A549 (cell line): ENCODE measurements at regions of chr1 and their contacts with region 1.

Region 1: DNA sequence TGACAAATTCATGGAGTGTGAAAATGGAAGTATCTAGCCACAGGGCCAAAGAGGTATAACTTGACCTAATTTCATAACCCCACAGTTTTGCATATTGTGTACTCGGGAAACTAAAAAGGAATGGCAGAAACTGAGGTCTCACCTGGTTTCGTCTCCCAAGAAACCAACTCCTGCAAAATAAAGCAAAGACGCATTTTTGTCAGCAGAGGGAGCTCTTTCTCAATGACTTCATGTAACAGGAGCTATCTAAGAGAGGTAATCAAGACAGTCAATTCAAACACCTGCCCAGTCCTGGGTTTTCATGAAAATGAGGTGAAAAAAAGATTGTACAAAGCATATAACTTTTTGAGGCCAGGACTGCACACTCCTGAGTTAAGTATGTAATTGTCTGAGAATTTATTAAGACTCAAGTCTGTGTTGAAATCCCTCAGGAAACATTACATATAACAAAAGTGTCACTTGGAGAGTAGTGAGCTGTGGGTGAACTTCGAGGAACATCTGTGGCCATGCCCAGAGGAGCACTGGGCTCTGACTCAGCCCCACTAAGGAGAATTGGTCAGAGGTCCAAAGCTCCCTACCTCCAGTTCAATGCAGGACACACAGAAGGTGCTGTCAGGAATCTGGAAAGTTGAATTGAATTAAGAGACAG is 17.6 kb downstream of the FCRL4 start:
- DNase-seq: peak; percentile 48 to 65
- ATAC-seq: peak; percentile 58 to 87; a peak in 3 of 6 replicates
- H3K4me3 ChIP-seq: no peak overlapping the region
- H3K27ac ChIP-seq: no peak overlapping the region
- H3K4me1 ChIP-seq: no peaks in the 10 kb centered on the region
- CTCF ChIP-seq: peak; percentile 76
- EP300 ChIP-seq: no peak
- POLR2A ChIP-seq: no peak
- RAD21 ChIP-seq: peak; percentile 52 to 57; a peak in 4 of 5 replicates

Region 2: GRCh38 chr1:157472056-157472698 is 108.1 kb before region 1 on chr1:
- CTCF ChIA-PET with region 1: no interaction called
- POLR2A ChIA-PET with region 1: no interaction called
- DNase-seq: no peak
- ATAC-seq: no peak
- H3K4me3 ChIP-seq: no peak overlapping the region
- H3K27ac ChIP-seq: no peak overlapping the region
- H3K4me1 ChIP-seq: no peaks in the 10 kb centered on the region
- CTCF ChIP-seq: no peak
- EP300 ChIP-seq: no peak
- POLR2A ChIP-seq: no peak
- RAD21 ChIP-seq: no peak

Region 3: DNA sequence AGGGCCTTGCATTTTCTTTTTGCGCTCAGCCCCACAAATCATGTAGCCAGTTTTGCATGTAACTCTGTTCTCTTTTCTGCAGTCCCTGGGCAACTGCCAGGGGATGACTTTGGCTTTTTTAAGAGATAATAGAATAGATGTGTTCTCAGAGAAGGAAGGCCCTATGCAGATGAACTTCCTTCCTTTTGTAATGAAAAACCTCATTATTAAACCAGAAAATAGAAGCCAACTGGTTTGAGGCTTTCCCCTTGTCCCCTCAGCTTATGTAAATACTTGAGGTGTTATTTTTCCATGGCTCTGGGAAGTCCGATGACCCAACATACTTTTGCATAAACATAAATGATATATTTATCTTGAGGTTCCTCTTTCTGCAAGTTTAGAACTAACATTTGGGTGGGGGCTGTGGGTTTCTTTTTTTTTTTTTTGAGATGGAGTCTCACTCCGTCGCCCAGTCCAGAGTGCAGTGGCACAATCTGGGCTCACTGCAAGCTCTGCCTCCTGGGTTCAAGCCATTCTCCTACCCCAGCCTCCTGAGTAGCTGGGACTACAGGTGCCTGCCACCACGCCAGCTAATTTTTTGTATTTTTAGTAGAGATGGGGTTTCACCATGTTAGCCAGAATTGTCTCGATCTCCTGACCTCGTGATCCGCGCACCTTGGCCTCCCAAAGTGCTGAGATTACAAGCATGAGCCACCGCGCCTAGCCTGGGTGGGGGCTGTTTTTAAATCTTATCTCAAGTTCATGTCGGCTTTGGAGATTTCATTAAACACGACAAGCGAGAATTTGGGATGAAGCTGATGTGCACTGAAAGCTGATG is 13.6 kb before region 1 on chr1:
- CTCF ChIA-PET with region 1: interaction called, 43 read pairs
- POLR2A ChIA-PET with region 1: no interaction called
- DNase-seq: no peak
- ATAC-seq: no peak
- H3K4me3 ChIP-seq: no peak overlapping the region
- H3K27ac ChIP-seq: no peak overlapping the region
- H3K4me1 ChIP-seq: no peaks in the 10 kb centered on the region
- CTCF ChIP-seq: no peak
- EP300 ChIP-seq: no peak
- POLR2A ChIP-seq: no peak
- RAD21 ChIP-seq: no peak

Region 4: GRCh38 chr1:157595356-157595755 is 15.1 kb after region 1 on chr1:
- CTCF ChIA-PET with region 1: interaction called, 20 read pairs
- POLR2A ChIA-PET with region 1: no interaction called
- DNase-seq: no peak
- ATAC-seq: no peak
- H3K4me3 ChIP-seq: no peak overlapping the region
- H3K27ac ChIP-seq: no peak overlapping the region
- H3K4me1 ChIP-seq: no peaks in the 10 kb centered on the region
- CTCF ChIP-seq: no peak
- EP300 ChIP-seq: no peak
- POLR2A ChIP-seq: no peak
- RAD21 ChIP-seq: no peak

Region 5: DNA sequence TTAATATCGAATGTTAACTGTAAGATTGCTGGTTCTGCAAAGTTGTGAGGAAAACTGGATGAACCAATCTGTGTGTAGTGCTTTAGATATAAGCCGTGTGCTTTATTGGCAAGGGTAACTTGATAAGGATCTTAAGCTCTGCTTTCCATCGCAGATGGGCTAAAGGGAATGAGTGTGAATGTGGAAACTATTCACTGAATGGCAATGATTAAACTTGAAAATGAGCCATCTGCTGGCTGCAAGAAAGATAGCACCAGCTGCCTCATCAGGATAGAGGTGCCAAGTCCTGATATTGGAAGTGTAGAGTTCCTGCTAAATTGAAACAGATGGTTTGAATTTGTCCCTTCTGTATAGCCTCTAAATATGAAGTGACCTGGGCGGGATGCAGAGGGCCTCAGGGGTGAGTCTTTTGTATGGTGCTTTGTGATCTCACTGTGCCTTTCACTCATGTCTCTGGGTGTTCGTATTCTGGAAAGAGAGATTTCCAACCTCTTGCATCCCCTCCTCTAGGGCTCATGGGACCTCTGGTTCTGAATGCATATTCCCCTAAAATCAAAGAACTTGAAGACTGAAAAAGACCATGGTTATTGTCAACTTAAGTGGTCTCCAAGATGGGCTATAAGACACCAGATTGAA is 111.1 kb after region 1 on chr1:
- CTCF ChIA-PET with region 1: interaction called, 13 read pairs
- POLR2A ChIA-PET with region 1: no interaction called
- DNase-seq: peak; percentile 28 to 38
- ATAC-seq: peak; percentile 85 to 88
- H3K4me3 ChIP-seq: no peak overlapping the region
- H3K27ac ChIP-seq: no peak overlapping the region
- H3K4me1 ChIP-seq: no peaks in the 10 kb centered on the region
- CTCF ChIP-seq: peak; percentile 49
- EP300 ChIP-seq: no peak
- POLR2A ChIP-seq: no peak
- RAD21 ChIP-seq: peak in 1 of 2 experiments; percentile 32; a peak in 2 of 5 replicates